GM10248 (cell line): ENCODE measurements at regions of chr14 and their contacts with region 1.

Region 1: DNA sequence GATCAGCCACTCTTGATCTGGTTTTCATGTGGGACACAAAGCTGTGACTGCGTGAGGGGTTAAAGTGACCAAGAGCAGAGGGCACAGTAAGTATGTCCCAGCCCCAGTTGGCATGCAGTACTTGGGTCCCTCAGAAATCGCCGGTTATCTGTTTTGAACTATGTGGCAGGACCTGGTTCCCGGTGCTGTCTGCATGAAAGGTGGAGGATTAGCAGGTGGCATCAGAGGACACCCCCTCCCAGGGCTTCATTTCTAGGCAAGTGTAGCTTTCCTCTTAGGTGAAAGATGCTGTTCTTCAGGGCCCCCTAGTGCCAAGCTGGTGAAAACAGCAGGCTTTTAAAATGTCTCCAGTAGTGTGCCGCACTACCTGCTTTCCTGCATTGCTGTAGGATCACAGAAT is 57.1 kb downstream of the ATG14 start:
- DNase-seq: peak; percentile 63
- CTCF ChIP-seq: peak; percentile 77

Region 2: DNA sequence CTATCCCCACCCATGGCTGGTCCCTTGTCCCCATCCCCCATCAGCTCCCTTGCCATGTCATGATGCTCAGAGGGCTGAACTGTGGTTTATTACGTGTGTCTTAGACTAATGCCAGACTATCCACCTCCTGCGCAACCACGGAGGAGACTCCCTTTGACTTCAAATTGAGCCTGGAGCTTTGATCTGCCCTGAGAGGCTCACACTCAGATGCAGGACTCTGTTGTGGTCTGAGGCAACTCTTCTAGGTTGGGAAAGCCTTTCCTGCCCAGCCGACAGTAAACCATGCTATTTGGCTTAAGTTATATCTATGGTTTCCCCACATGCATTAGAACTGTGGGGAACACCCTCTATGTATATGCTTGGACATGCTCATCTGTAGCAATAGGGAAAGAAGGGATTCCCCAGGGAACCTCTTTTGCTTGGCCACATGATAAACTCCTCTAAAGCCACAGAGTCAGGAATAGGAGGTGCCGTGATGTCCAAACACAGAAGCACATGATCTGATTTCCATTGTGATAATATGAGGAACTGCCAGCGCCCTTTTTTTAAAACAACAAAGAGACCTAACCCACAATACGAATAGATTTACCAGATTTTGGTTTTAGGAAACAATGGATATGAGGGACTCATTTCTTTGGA is 236.6 kb before region 1 on chr14:
- CTCF ChIA-PET with region 1: no interaction called
- POLR2A ChIA-PET with region 1: no interaction called
- DNase-seq: no peak
- CTCF ChIP-seq: no peak

Region 3: DNA sequence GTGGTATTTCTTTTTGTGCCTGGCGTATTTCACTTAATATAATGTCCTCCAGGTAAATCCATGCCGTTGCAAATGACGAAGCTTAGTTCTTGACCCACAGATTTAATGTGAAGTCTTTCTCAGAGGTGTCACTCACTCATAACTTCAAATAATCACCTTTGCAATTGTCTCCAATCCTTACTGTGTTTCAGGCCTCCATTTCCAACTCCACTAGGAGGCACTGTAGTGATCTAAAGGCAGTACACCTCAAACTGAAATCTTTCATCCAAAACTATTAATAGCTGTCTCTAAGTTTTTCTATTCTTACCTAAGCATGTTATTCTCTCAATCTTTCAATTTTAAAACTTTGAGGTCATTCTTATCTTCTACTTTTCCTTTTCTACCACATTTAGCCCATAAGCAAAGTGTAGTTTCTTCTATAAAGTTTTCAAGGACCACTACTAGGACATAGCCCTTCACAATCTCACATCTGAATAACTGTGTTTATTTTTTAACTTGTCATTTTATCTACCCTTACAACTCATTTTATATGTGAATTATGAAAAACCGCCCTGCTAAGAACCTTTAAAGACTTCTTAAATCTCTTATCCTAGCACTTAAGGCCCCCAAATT is 108.7 kb before region 1 on chr14:
- CTCF ChIA-PET with region 1: interaction called, 46 read pairs
- POLR2A ChIA-PET with region 1: no interaction called
- DNase-seq: peak; percentile 38
- CTCF ChIP-seq: peak; percentile 60

Region 4: DNA sequence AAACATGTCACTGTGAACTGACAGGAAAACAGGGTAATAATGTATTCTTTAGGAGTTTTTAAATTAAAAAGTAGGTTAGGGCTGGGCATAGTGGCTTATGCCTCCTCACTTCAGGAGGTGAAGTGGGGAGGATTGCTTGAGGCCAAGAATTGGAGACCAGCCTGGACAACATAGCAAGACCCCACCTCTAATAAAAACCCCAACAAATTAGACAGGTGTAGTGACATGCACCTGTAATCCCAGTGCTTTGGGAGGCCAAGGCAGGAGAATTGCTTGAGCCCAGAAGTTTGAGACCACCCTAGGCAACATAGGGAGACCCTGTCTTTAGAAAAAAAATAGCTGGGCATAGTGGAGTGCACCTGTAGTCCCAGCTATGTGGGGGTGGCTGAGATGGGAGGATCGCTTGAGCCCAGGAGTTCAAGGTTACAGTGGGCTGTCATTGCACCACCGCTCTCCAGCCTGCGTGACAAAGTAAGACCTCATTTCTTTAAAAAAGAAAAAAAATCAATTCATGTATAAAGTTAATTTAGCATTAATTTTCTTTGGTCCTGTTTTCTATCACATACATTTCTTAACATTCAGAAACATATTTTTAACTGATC is 62.9 kb before region 1 on chr14:
- CTCF ChIA-PET with region 1: interaction called, 12 read pairs
- POLR2A ChIA-PET with region 1: no interaction called
- DNase-seq: no peak
- CTCF ChIP-seq: no peak

Region 5: DNA sequence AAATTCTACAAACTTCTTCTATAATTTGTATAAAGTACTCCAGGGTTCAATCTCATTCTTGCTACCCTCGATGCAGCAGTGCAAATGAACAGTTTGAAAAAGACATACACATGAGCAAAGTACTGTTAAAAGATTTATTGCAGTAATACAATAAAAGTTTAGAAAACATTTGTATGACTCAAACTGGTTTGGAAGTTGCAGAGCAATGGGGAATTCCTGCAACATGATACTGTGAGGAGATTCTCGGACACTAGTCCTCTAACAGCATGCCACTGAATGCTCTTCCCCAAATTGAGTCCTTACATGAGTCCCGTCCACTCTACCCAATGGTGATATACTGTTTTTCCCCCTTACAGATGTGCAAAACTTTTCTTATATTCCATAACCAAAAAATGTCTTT is 11.8 kb after region 1 on chr14:
- CTCF ChIA-PET with region 1: interaction called, 24 read pairs
- POLR2A ChIA-PET with region 1: no interaction called
- DNase-seq: no peak
- CTCF ChIP-seq: no peak

Region 6: DNA sequence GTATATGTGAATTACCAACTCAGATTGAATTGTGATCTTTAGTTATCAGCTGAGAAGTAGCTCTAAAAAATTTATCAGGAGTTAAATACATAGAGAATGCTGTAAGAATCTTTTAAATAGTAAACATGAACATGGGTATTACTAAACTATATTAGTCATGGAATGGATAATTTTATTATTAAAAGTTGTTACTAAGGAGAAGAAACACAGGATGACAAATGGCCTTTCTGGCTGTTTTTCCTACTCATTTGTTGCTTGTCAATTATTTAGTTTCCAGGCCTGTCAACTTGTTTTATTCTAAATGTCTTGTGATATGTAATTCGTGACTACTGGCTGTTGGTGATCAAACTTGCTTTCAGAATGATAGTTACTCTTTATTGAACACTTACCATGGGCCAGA is 284.2 kb after region 1 on chr14:
- CTCF ChIA-PET with region 1: no interaction called
- POLR2A ChIA-PET with region 1: no interaction called
- DNase-seq: no peak
- CTCF ChIP-seq: no peak